ENCODE measurements at regions of chr5 and their contacts with region 1.

Region 1: DNA sequence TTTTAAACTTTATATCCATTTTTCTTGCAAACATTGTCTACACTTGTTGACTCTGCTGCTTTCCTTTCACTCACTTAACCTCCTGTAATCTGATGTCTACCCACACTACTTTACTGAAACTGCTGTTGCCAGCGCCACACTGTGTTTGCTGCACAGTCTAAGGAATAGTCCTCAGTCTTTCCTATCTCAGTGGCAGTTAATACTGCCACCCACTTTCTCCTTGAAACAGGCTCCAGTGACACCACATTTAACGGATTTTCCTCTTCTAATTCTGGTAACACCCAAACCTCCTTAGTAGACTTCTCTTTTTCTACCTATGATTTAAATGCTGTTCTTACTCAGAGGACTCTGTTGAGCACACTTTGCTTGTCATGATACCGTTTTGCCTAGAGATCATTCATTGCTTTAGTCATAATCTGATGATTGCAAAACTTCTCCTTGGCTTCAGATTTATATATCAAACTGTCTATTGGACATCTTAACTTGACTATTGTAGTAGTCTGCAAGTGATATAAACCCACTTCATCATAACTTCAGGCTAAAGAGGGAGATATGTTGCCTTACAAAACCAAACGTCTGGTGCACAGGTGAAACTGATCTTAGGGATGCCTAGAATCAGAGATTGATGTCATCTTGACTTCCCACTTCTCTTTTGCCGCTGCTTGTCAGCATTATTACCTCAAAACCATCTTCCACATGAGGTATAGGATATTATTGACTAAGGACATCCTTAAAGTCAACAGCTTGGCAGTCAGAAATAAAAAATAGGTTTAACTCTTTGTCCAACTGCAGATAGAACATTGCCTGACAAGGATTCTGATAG is 94.1 kb downstream of the CDC42SE2 start:
- DNase-seq: peak; percentile 63
- ATAC-seq: peak; percentile 52
- H3K4me3 ChIP-seq: peak overlapping the region in 1 of 5 experiments; percentile 16
- H3K4me3 Mint-ChIP-seq: peak overlapping the region; percentile 64
- H3K27ac ChIP-seq: peak overlapping the region; percentile 67 to 80
- H3K27ac Mint-ChIP-seq: peak overlapping the region; percentile 87
- H3K4me1 ChIP-seq: peaks cover 27 to 32% of the 10 kb centered on the region in 2 donors
- H3K4me1 Mint-ChIP-seq: peaks cover 45% of the 10 kb centered on the region
- H3K27me3 ChIP-seq: no peaks in the 10 kb centered on the region
- H3K27me3 Mint-ChIP-seq: no peaks in the 10 kb centered on the region
- CTCF ChIP-seq: no peak

Region 2: GRCh38 chr5:131375351-131375750 is 17.4 kb after region 1 on chr5:
- CTCF ChIA-PET with region 1: interaction called, 5 read pairs
- POLR2A ChIA-PET with region 1: interaction called, 5 read pairs
- intact Hi-C with region 1: loop called (anchors 1 kb)
- DNase-seq: peak; percentile 50
- ATAC-seq: no peak
- H3K4me3 ChIP-seq: peak overlapping the region in 2 of 5 experiments; percentile 5 to 37
- H3K4me3 Mint-ChIP-seq: peak overlapping the region; percentile 63
- H3K27ac ChIP-seq: peak overlapping the region; percentile 71 to 99
- H3K27ac Mint-ChIP-seq: peak overlapping the region; percentile 81
- H3K4me1 ChIP-seq: peaks cover 75 to 94% of the 10 kb centered on the region in 2 donors
- H3K4me1 Mint-ChIP-seq: peaks cover 84% of the 10 kb centered on the region
- H3K27me3 ChIP-seq: no peaks in the 10 kb centered on the region
- H3K27me3 Mint-ChIP-seq: no peaks in the 10 kb centered on the region
- CTCF ChIP-seq: no peak

Region 3: DNA sequence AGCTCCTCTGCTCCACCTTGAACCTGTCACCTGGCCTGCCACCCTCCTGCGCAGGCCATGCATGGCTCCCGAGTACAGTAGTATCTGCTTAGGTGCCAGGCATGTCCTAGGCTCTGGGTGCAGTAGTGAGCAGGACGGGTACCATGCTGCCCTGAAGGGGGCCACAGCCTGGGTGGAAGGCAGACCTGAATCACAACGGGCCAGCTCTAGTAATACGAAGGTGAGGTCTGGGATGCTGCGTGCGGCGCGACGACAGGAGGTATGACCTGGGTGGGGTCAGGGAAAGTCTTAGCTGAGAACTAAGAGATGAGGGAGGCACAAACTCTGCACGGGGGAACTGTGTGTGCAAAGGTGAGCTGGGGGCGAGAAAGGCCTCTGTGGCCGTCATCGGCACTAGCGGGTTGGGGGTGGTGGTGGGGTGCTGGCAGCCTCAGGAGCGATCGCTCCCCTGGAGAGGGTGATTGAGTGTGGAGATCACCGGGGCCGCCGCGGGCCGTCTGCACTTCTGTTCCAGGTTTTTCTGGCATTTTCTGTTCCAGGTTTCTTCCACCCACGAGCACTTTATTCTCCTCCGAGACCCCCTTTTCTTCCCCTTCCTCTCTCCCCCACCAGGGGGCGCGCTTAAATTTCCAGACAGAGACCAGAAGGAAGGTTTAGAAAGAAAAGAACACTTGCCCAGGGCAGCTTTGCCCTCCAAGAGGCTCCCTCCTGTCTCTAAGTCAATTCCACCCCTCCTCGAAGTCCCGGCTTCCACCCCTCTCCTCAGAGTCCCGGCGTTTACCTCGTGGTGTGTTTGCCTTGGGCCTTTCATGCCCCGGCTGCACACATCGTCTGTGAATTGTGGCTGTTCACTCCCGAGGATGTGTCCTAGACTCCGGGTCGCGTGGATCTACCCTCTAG is 914.6 kb after region 1 on chr5:
- CTCF ChIA-PET with region 1: no interaction called
- POLR2A ChIA-PET with region 1: no interaction called
- intact Hi-C with region 1: no loop called
- DNase-seq: peak; percentile 71
- ATAC-seq: peak; percentile 49
- H3K4me3 ChIP-seq: no peak overlapping the region
- H3K4me3 Mint-ChIP-seq: peak overlapping the region; percentile 59
- H3K27ac ChIP-seq: no peak overlapping the region
- H3K27ac Mint-ChIP-seq: no peak overlapping the region
- H3K4me1 ChIP-seq: peaks cover 10 to 12% of the 10 kb centered on the region in 2 donors
- H3K4me1 Mint-ChIP-seq: peaks cover 12% of the 10 kb centered on the region
- H3K27me3 ChIP-seq: peaks cover 0 to 23% (median 3%) of the 10 kb centered on the region in 4 experiments
- H3K27me3 Mint-ChIP-seq: peaks cover 18% of the 10 kb centered on the region
- CTCF ChIP-seq: peak; percentile 85